GM13977 (cell line): ENCODE measurements at regions of chr20 and their contacts with region 1.

Region 1: DNA sequence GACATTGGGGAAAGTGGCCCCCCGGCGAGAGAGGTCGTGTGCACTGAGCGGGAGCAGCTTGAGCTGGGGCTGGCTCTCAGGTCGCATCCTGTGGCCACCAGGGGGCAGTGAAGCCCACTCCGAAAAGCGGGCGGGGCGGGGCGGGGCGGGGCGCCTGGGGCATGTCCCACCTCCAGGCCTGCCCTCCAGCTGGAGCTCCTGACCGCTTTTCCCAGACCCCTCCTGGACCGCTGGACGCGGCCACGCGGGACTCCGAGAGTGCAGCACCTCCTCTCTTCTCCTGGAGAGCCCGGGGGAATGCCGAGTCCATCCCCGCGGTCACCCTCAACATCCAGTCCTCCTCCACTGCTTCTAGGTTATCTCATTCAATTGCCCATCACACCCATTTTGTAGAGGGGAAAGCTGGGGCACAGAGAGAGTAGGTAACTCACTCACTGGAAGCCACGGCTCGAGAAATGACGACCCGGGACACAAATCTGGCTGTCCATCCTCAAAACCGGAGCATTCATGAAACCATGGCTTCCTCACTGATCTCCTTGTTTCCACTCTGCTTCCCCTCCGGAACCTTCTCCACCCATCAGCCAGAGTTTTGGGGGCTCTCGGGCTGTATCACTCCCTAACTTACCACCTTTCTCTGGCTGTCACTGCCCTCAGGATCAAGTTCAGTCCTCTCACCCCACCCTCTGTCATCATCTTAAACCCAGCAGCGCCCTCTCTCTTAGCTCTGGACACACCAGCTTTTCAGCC is 24.1 kb downstream of the COX4I2 start:
- DNase-seq: peak; percentile 88
- CTCF ChIP-seq: peak; percentile 83

Region 2: GRCh38 chr20:31430568-31431115 is 231.2 kb before region 1 on chr20:
- in situ Hi-C with region 1: no loop called
- DNase-seq: no peak
- CTCF ChIP-seq: no peak

Region 3: GRCh38 chr20:31572701-31573554 is 88.9 kb before region 1 on chr20:
- in situ Hi-C with region 1: no loop called
- DNase-seq: peak; percentile 93
- CTCF ChIP-seq: peak; percentile 7

Region 4: DNA sequence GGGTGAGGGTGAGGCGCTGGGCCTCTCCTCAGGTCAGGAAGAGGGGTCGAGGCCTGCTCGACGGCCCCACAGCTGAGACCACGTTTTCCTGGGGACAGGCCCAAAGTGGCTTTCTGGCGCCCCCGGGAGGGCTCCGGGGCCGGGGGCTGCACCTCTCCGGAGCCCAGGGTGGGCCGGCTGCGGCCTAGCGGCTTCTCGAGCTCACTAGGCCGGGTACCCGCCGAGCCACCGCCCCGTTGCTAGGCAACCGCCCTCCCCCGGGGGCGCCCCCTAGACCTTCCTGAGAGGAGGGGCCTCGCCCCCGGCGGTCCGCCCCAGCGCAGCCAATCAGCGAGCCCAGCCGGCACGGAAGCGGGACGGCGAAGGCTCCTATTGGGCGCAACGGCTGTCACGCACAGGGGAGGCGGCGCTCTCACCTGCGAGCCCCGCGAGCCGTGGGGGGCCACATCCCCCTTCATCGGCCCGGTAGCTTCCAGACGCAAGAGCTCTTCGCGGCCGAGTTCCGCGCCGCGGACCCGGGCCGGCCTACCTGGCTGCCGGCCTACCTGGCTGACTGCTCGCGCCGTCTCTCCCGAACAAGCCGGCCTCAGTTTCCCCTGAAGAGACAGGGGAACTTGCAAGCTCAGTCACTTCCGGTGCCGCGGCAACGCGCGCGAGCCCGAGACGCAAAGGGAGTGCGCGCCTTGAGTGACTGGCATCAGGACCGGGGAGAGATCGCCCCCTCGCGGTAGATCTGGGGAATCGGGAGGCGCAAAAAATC is 61.7 kb after region 1 on chr20:
- in situ Hi-C with region 1: loop called (anchors 10 kb)
- DNase-seq: peak; percentile 99
- CTCF ChIP-seq: peak; percentile 89

Region 5: DNA sequence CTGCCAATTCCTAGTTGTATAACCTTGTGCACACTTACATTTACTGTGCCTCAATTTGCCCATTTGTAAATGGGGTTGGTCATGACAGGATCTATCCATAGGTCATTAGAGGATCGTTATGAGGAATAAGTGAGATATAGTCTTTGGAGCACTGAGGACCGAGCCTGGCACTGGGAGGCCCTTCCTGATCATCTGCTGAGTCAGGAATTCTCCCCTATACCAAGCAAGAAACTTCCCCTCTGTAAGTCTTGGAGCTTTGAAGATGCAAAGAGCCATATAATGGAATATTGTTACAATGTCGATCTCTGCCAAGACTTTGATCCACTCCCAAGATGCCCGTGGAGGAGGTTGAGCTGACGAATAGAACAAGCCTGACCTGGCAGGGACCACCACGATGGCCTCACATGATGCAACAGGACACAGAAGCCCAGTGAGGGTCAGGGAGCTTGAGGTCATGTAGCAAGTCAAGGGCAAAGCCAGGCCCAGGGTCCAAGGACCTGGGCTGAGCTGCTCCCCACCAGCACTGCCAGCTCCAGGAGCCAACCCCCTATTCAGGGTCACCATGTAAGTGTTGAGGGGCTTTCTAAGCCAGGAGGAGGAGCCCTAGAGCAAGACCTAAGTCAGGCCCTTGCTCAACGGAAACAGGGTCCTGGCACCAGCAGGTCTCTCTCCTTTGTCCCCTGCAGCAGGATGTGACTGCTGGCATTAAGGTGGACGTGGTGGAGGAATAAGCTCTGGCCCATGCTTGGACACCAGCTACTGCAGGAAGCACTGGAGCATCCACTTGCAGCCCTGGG is 273.4 kb after region 1 on chr20:
- in situ Hi-C with region 1: no loop called
- DNase-seq: no peak
- CTCF ChIP-seq: no peak

Region 6: GRCh38 chr20:31987744-31988143 is 325.9 kb after region 1 on chr20:
- in situ Hi-C with region 1: no loop called
- DNase-seq: no peak
- CTCF ChIP-seq: no peak